AG04449 (cell line): ENCODE measurements at regions of chr19 and their contacts with region 1.

Region 1: DNA sequence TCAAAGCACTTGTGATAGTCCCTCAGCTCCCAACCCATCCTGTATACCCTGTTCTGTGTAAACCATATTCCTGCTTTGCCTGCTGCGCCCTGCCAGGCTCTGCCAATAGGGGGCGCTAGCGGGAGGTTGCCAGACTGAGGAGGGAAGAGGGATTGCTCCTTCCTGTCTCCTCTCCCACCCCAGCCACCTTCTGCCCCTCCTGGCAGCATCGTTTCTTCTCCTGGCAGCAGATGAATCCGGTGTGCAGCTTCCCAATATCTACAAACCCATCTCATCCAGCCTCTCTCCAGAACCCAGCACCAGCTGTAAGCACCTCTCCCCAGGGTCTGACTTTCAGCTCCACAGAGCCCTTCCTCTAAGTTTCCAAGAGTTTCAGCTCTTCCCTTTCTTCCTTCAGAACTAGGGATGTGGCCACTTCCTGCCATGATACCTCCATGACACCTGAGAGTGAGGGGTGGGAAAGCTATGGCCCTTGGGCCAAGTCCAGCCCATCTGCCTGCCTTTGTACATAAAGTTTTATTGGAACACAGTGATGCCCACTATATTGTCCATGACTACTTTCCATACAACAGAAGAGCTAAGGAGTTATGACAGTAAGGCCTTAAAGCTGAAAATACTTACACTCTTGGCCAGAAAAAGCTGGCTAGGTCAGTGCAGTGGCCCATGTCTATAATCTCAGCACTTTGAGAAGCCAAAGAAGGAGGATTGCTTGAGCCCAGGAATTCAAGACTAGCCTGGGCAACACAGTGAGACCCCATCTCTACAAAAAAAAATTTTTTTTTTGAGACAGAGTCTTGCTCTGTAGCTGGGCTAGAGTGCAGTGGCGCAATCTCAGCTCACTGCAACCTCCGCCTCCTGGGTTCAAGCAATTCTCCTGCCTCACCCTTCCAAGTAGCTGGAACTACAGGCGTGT is 34.5 kb upstream of the ATP1A3 start:
- DNase-seq: no peak
- H3K4me3 ChIP-seq: no peak overlapping the region
- CTCF ChIP-seq: peak; percentile 37

Region 2: GRCh38 chr19:41951686-41952172 is 76.8 kb before region 1 on chr19:
- CTCF ChIA-PET with region 1: no interaction called
- POLR2A ChIA-PET with region 1: no interaction called
- DNase-seq: no peak
- H3K4me3 ChIP-seq: peak overlapping the region; percentile 33; the same call in 1 of the 2 replicates
- CTCF ChIP-seq: peak; percentile 96

Region 3: GRCh38 chr19:41998246-41999020 is 30.1 kb before region 1 on chr19:
- CTCF ChIA-PET with region 1: interaction called, 37 read pairs
- POLR2A ChIA-PET with region 1: no interaction called
- DNase-seq: no peak
- H3K4me3 ChIP-seq: no peak overlapping the region
- CTCF ChIP-seq: peak; percentile 87

Region 4: GRCh38 chr19:42010245-42011126 is 18.1 kb before region 1 on chr19:
- CTCF ChIA-PET with region 1: interaction called, 19 read pairs
- POLR2A ChIA-PET with region 1: no interaction called
- DNase-seq: peak; percentile 14
- H3K4me3 ChIP-seq: no peak overlapping the region
- CTCF ChIP-seq: no peak

Region 5: DNA sequence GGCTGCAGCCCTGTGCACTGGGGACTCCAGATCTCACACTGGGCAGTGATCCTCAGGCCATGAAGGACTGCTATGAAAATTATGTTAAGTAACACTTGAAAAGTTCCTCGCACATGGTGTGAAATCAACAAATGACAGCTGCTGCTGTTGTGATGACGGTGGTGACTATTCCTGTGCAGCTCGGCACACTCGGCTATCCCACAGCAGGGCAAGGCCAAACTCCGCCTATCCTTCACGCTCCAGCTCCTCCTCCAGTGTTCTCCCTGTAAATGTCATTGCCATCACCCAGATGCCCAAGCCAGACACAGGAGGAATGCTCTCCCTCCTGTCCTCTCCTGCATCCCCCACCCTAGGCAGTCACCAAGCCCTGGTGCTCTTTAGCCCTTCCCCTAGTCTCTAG is 10.1 kb after region 1 on chr19:
- CTCF ChIA-PET with region 1: interaction called, 24 read pairs
- POLR2A ChIA-PET with region 1: no interaction called
- DNase-seq: no peak
- H3K4me3 ChIP-seq: no peak overlapping the region
- CTCF ChIP-seq: no peak

Region 6: DNA sequence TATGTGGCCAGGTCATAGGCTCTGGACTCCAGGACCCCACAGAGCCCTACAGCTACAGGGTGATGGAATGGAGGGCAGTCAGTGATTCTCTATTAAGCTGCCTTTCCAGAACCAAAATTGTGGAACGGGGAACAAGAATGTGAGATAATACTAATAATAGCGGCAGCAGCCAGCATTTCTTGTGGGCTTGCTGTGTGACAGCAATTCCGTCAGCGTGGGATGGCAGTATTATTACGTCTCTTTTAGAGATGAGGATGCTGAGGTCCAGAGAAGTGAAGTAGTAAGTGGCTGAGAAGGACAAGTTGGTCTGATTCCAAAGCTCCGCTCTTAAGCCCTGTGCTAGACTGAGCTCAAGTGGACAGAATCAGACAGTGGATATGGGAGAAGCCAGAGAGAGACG is 17.0 kb after region 1 on chr19:
- CTCF ChIA-PET with region 1: interaction called, 54 read pairs
- POLR2A ChIA-PET with region 1: no interaction called
- DNase-seq: no peak
- H3K4me3 ChIP-seq: no peak overlapping the region
- CTCF ChIP-seq: no peak

Region 7: DNA sequence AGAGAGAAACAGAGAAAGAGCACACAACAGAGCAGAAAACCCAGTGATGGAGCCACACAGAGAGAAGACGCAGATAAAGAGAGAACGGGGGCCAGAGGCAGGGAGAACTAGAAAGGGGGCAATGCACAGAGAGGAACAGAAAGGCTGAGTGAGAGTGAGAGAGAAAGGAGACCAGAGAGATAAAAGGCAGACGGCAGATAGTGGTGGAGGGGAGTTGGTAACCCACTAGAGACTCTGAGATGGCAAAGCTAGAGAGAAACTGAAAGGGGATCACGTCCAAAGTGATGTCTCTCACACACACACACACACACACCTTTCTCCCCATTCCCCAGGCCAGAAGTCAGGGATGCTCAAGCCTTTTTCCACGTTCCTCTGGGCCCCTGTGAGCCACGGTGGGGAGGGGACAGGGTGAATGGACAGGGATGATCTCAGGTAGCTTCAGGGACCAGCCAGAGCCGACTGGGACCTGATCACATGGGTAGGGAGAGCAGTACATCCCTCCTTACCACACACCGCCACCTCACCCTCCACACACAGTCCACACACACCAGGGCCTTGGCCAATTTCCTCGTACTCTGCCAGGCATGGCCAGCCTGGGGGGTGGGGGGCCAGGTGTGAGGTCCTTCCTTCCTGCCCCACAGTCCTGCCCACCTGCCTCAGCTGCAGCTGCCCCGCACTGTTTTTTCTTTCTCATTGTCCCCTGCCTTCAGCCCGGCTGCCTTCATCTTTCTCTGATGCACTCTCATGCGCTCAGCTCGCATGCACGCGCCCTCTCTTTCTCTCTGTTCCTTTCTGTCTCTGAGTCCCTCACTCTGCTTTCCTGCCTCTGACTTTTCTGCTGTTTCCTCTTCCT is 126.1 kb after region 1 on chr19:
- CTCF ChIA-PET with region 1: no interaction called
- POLR2A ChIA-PET with region 1: no interaction called
- DNase-seq: no peak
- H3K4me3 ChIP-seq: no peak overlapping the region
- CTCF ChIP-seq: no peak